SK-N-SH (cell line): ENCODE measurements at regions of chr2 and their contacts with region 1.

Region 1: GRCh38 chr2:39227628-39228412 is 15.9 kb downstream of the CDKL4 start:
- DNase-seq: peak; percentile 81
- H3K4me3 ChIP-seq: no peak overlapping the region
- H3K27ac ChIP-seq: no peak overlapping the region
- H3K4me1 ChIP-seq: peaks cover 0 to 2% of the 10 kb centered on the region in 2 experiments; a peak in 1 of 4 replicates
- H3K27me3 ChIP-seq: no peaks in the 10 kb centered on the region
- CTCF ChIP-seq: peak; percentile 99
- EP300 ChIP-seq: no peak
- RAD21 ChIP-seq: peak; percentile 90

Region 2: GRCh38 chr2:38991899-38992298 is 235.9 kb before region 1 on chr2:
- CTCF ChIA-PET with region 1: interaction called, 12 read pairs
- POLR2A ChIA-PET with region 1: no interaction called
- DNase-seq: no peak
- H3K4me3 ChIP-seq: no peak overlapping the region
- H3K27ac ChIP-seq: no peak overlapping the region
- H3K4me1 ChIP-seq: no peaks in the 10 kb centered on the region
- H3K27me3 ChIP-seq: no peaks in the 10 kb centered on the region
- CTCF ChIP-seq: no peak
- EP300 ChIP-seq: no peak
- RAD21 ChIP-seq: no peak

Region 3: GRCh38 chr2:39059366-39059952 is 168.4 kb before region 1 on chr2:
- CTCF ChIA-PET with region 1: interaction called, 300 read pairs
- POLR2A ChIA-PET with region 1: no interaction called
- DNase-seq: peak; percentile 48
- H3K4me3 ChIP-seq: no peak overlapping the region
- H3K27ac ChIP-seq: 0 out of 4 replicates have a peak overlapping the region, but pooled peaks of 1 of the 2 experiments have one; percentile 8
- H3K4me1 ChIP-seq: peaks cover 0 to 3% of the 10 kb centered on the region in 2 experiments; a peak in 2 of 4 replicates
- H3K27me3 ChIP-seq: no peaks in the 10 kb centered on the region
- CTCF ChIP-seq: peak; percentile 96
- EP300 ChIP-seq: no peak
- RAD21 ChIP-seq: peak; percentile 85

Region 4: DNA sequence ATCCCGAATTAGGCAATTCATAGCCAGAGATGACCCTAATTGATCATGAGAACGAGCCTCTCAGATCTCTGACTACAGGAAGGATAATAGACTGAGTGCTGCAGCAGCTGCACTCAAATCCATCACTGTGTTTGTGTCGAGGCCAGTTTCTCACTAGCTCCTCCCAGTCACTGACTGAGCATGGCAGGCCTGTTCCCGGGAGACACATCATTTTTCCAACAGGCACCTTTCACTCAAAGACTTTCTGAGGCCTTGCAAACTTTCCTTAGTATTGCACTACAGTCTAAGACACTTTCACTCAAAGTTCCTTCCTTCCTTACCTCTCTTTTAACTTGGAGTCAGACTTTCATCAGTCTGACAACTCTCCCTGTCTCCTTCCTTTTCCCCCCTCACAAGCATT is 120.7 kb before region 1 on chr2:
- CTCF ChIA-PET with region 1: interaction called, 10 read pairs
- POLR2A ChIA-PET with region 1: no interaction called
- DNase-seq: peak; percentile 83
- H3K4me3 ChIP-seq: no peak overlapping the region
- H3K27ac ChIP-seq: peak overlapping the region; percentile 18 to 43; a peak in 2 of 4 replicates
- H3K4me1 ChIP-seq: peaks cover 12 to 20% of the 10 kb centered on the region in 2 experiments; a peak in 3 of 4 replicates
- H3K27me3 ChIP-seq: no peaks in the 10 kb centered on the region
- CTCF ChIP-seq: no peak
- EP300 ChIP-seq: no peak
- RAD21 ChIP-seq: no peak

Region 5: DNA sequence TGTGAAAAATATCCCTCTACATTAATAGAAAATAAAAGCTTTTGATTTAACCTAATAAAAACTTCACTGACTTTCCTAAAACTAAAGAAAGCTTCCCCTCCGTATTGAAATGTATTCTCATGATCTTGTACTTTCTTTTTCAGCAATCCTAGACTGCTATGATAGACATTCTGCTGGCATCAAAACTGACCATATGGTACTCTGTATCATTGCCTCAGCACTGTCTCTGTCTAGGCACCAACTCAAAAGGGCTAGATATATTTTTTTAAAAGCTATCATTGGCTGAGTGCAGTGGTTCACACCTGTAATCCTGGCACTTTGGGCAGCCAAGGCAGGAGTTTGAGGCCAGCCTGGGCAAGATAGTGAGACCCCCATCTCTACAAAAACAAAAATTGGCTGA is 17.0 kb before region 1 on chr2:
- CTCF ChIA-PET with region 1: interaction called, 21 read pairs
- POLR2A ChIA-PET with region 1: no interaction called
- DNase-seq: no peak
- H3K4me3 ChIP-seq: no peak overlapping the region
- H3K27ac ChIP-seq: no peak overlapping the region
- H3K4me1 ChIP-seq: no peaks in the 10 kb centered on the region
- H3K27me3 ChIP-seq: no peaks in the 10 kb centered on the region
- CTCF ChIP-seq: no peak
- EP300 ChIP-seq: no peak
- RAD21 ChIP-seq: no peak

Region 6: DNA sequence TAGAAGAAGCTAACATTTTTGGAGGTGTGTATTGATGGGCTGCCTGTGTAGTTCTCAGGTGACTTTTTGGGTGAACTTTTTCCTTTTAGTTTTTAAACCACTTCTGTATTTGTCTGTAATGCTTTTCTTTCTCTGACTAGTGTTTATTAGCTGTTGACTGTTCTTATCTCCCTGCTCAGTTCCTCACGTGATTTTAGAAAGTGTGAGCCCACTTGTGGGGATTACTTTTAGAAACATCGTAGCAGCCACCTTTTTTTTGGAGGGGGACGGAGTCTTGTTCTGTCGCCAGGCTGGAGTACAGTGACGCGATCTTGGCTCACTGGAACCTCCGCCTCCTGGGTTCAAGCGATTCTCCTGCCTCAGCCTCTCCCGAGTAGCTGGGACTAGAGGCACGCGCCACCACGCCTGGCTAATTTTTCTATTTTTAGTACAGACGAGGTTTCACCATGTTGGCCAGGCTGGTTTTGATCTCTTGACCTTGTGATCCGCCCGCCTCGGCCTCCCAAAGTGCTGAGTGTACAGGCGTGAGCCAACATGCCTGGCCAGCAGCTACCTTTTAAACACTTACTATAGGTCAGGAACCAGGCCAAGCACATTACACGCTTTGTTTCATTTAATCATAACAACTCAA is 25.2 kb after region 1 on chr2:
- CTCF ChIA-PET with region 1: interaction called, 24 read pairs
- POLR2A ChIA-PET with region 1: no interaction called
- DNase-seq: no peak
- H3K4me3 ChIP-seq: no peak overlapping the region
- H3K27ac ChIP-seq: no peak overlapping the region
- H3K4me1 ChIP-seq: no peaks in the 10 kb centered on the region
- H3K27me3 ChIP-seq: no peaks in the 10 kb centered on the region
- CTCF ChIP-seq: no peak
- EP300 ChIP-seq: no peak
- RAD21 ChIP-seq: no peak